T-cell (primary cell): ENCODE measurements at regions of chr2 and their contacts with region 1.

Region 1: GRCh38 chr2:168015274-168015953 is 232.0 kb downstream of the STK39 start:
- DNase-seq: no peak
- ATAC-seq: no peak
- H3K4me3 ChIP-seq: no peak overlapping the region
- H3K4me3 Mint-ChIP-seq: no peak overlapping the region
- H3K27ac ChIP-seq: no peak overlapping the region
- H3K27ac Mint-ChIP-seq: no peak overlapping the region
- H3K4me1 ChIP-seq: peaks cover 2 to 7% of the 10 kb centered on the region in 2 experiments
- H3K4me1 Mint-ChIP-seq: peaks cover 0 to 12% (median 9%) of the 10 kb centered on the region in 3 donors
- H3K27me3 ChIP-seq: no peaks in the 10 kb centered on the region
- H3K27me3 Mint-ChIP-seq: no peaks in the 10 kb centered on the region

Region 2: DNA sequence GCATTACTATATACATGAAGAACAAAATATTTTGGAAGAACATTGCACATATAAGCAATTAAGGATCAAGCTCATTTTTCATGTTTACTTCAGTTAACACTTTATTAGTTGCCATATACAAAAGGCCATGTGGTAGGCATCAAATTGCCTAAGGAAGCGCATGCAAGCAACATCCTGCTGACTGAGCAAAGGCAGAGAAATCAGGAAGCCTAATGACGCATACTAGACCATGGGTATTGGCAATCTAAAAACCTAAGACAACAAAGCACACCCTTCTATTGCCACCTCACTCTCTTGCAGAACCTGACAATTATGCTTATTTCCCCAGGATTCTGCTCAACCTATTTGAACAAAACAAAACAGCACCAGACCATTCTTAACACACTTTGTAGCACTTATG is 60.0 kb after region 1 on chr2:
- CTCF ChIA-PET with region 1: no interaction called
- POLR2A ChIA-PET with region 1: interaction called in 1 of 2 experiments, 15 read pairs
- DNase-seq: no peak
- ATAC-seq: no peak
- H3K4me3 ChIP-seq: no peak overlapping the region
- H3K4me3 Mint-ChIP-seq: no peak overlapping the region
- H3K27ac ChIP-seq: no peak overlapping the region
- H3K27ac Mint-ChIP-seq: no peak overlapping the region
- H3K4me1 ChIP-seq: no peaks in the 10 kb centered on the region
- H3K4me1 Mint-ChIP-seq: peaks cover 0 to 3% (median 0%) of the 10 kb centered on the region in 3 donors
- H3K27me3 ChIP-seq: no peaks in the 10 kb centered on the region
- H3K27me3 Mint-ChIP-seq: no peaks in the 10 kb centered on the region